K562 (cell line): ENCODE measurements at regions of chr2 and their contacts with region 1.

Region 1: GRCh38 chr2:196171248-196171871 is at the start of gene STK17B:
- DNase-seq: peak; percentile 93 to 97 (median 96)
- ATAC-seq: peak; percentile 87
- H3K4me3 ChIP-seq: peak within 1 kb of the TSS; percentile 87
- H3K27ac ChIP-seq: peak within 1 kb of the TSS; percentile 91
- H3K4me1 ChIP-seq: peaks cover 12 to 26% of the 10 kb centered on the region in 2 experiments; a peak in 4 of 5 replicates
- H3K27me3 ChIP-seq: no peaks in the 10 kb centered on the region
- CTCF ChIP-seq: peak in 2 of 3 experiments; percentile 21 to 28; a peak in 2 of 6 replicates
- EP300 ChIP-seq: no peak
- POLR2A ChIP-seq: peak; percentile 93
- RAD21 ChIP-seq: no peak; a peak in 1 of 4 replicates
- polyA plus RNA-seq, gene STK17B: 2.3 to 3.0 TPM

Region 2: DNA sequence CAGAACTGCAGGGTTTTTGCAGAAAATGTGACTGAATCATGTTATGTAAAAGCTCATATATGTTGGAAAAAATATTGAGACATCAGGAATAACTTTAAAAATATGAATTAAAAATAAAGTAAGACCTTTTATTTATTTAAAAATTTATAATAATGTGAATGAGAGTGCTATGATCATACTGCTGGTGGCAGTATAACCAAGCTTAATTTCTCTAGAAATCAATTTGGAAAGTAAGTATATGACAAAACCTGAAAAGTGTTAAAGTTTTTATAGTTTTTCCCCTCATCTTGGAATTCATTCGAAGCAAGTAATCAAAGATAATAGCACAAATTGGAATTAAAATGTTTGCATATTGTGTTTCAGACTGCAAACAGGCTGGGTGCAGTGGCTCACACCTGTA is 506.8 kb before region 1 on chr2:
- CTCF ChIA-PET with region 1: no interaction called
- POLR2A ChIA-PET with region 1: no interaction called
- in situ Hi-C with region 1: no loop called
- intact Hi-C with region 1: no loop called
- DNase-seq: no peak
- ATAC-seq: no peak
- H3K4me3 ChIP-seq: no peak overlapping the region
- H3K27ac ChIP-seq: no peak overlapping the region
- H3K4me1 ChIP-seq: peaks cover 2 to 6% of the 10 kb centered on the region in 2 experiments; a peak in 3 of 5 replicates
- H3K27me3 ChIP-seq: no peaks in the 10 kb centered on the region
- CTCF ChIP-seq: no peak
- EP300 ChIP-seq: no peak
- POLR2A ChIP-seq: no peak
- RAD21 ChIP-seq: 0 out of 4 replicates have a peak, but pooled peaks of 1 of the 2 experiments have one; percentile 15

Region 3: DNA sequence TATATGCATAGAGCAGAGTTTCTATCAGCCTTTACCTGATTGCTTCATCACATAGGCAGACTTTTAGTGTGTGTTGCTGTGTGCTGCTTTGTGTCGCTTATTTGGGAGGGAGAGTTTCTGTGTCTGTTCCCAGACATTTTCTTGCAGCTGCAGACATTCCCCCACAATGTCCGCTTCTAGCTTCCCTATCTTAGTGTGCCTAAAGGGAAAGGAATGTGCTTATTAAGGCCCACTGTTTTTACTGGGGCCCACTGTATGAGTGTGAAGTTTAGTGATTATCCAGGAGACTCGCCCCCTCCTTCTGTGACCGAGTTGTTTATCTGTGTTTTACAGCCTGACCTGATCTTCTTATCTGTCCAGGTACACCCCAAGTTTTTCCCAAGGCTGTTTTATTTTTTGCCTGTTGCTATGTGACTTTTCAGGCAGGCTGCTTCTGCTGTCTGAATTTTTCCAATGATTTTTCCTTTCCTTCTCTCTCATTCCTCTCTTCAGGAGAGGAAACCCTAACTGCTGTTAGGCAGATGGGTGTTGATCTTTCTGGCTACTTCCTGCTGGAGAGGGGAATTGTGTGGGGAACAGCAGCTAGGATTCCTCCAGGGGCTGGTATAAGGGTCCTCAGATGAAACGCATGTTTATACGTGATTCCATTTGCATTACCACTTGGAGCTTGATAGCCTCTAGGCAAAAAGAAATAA is 47.5 kb before region 1 on chr2:
- CTCF ChIA-PET with region 1: no interaction called
- POLR2A ChIA-PET with region 1: no interaction called
- in situ Hi-C with region 1: no loop called
- intact Hi-C with region 1: no loop called
- DNase-seq: peak; percentile 55 to 79 (median 66)
- ATAC-seq: peak; percentile 79
- H3K4me3 ChIP-seq: no peak overlapping the region; the same call in 1 of the 2 replicates
- H3K27ac ChIP-seq: peak overlapping the region; percentile 65; the same call in 2 of the 3 replicates
- H3K4me1 ChIP-seq: peaks cover 6 to 23% of the 10 kb centered on the region in 2 experiments; a peak in 3 of 5 replicates
- H3K27me3 ChIP-seq: no peaks in the 10 kb centered on the region
- CTCF ChIP-seq: no peak
- EP300 ChIP-seq: peak; percentile 76
- POLR2A ChIP-seq: no peak
- RAD21 ChIP-seq: no peak

Region 4: DNA sequence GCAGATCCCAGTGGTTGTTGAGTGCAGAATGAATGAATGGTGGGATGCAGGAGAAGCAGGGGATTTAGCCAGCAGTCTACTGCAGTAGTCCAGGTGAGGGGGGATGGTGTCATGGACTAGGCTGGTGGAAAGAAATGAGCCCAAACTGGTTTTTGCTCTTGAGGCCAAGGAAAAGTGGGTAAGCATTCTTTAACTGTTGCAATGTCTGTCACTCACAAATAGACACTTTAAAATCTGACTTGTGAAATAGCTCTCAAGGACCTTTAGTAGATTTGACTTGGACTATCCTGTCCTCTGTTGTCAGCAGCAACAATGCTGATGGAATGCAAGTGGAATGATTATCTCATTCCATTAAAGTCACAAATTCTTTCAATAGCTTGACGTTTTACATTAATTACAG is 37.6 kb after region 1 on chr2:
- CTCF ChIA-PET with region 1: no interaction called
- POLR2A ChIA-PET with region 1: no interaction called
- in situ Hi-C with region 1: no loop called
- intact Hi-C with region 1: no loop called
- DNase-seq: no peak
- ATAC-seq: no peak
- H3K4me3 ChIP-seq: no peak overlapping the region
- H3K27ac ChIP-seq: no peak overlapping the region
- H3K4me1 ChIP-seq: peaks cover 0 to 6% of the 10 kb centered on the region in 2 experiments; a peak in 2 of 5 replicates
- H3K27me3 ChIP-seq: no peaks in the 10 kb centered on the region
- CTCF ChIP-seq: no peak
- EP300 ChIP-seq: no peak
- POLR2A ChIP-seq: no peak
- RAD21 ChIP-seq: no peak

Region 5: DNA sequence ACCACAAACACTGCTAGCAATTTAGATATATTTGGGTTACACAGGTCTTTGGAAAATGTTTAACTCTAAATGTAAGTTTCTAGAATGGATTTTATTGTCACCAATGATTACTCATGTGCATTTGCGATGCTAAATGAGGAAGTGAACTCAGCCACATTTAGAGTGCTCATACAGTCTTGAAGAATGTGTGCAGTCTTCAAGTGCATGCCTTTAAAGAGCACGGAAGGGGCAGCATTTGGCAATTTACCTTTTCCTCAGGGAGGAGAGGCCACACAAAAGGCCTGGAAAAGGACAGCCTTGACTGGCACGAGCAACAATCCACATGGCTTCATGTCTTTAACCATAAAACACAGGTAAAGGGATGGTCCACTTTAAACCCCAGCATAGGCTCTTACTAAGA is 78.5 kb after region 1 on chr2:
- CTCF ChIA-PET with region 1: no interaction called
- POLR2A ChIA-PET with region 1: no interaction called
- in situ Hi-C with region 1: no loop called
- intact Hi-C with region 1: no loop called
- DNase-seq: peak in 1 of 4 experiments; percentile 17
- ATAC-seq: peak; percentile 78
- H3K4me3 ChIP-seq: no peak overlapping the region
- H3K27ac ChIP-seq: no peak overlapping the region
- H3K4me1 ChIP-seq: peaks cover 0 to 8% of the 10 kb centered on the region in 2 experiments; a peak in 2 of 5 replicates
- H3K27me3 ChIP-seq: no peaks in the 10 kb centered on the region
- CTCF ChIP-seq: peak in 1 of 3 experiments; percentile 13; a peak in 1 of 6 replicates
- EP300 ChIP-seq: no peak
- POLR2A ChIP-seq: no peak
- RAD21 ChIP-seq: no peak

Region 6: DNA sequence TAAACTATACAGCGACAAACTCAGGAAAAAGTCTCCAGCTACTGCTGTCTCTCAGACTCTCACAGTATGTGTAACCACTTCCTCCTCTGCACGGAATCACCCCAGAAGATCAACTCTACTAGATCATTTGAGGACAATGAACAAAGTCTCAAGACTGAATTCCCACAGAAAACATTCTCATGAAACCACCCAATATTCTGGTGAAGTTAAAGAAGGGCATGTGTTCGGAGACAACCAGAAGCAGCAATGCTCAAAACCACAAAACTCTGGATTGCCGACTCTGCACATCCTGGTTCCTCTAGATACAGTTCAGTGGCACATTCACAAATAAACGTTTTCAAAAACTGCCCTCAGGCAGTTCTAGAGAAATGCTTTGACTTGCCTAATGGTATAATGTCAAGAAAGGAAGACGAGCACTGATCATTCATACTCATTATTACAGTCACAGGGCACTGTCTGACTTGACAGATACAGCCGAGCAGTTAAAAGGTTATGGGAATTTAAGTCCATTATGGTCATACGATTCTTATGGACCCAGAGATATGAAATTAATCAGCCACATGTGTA is 91.9 kb after region 1 on chr2:
- CTCF ChIA-PET with region 1: no interaction called
- POLR2A ChIA-PET with region 1: interaction called, 7 read pairs
- in situ Hi-C with region 1: no loop called
- intact Hi-C with region 1: loop called (anchors 1 kb)
- DNase-seq: peak in 2 of 4 experiments; percentile 19 to 48
- ATAC-seq: peak; percentile 83
- H3K4me3 ChIP-seq: no peak overlapping the region; the same call in 1 of the 2 replicates
- H3K27ac ChIP-seq: peak overlapping the region; percentile 65
- H3K4me1 ChIP-seq: peaks cover 7 to 35% of the 10 kb centered on the region in 2 experiments; a peak in 4 of 5 replicates
- H3K27me3 ChIP-seq: no peaks in the 10 kb centered on the region
- CTCF ChIP-seq: no peak
- EP300 ChIP-seq: 0 out of 2 replicates have a peak, but pooled peaks have one; percentile 3
- POLR2A ChIP-seq: no peak
- RAD21 ChIP-seq: no peak

Region 7: GRCh38 chr2:196277002-196277401 is 105.6 kb after region 1 on chr2:
- CTCF ChIA-PET with region 1: no interaction called
- POLR2A ChIA-PET with region 1: interaction called, 3 read pairs
- in situ Hi-C with region 1: no loop called
- intact Hi-C with region 1: loop called (anchors 5 kb)
- DNase-seq: peak; percentile 15 to 29 (median 23)
- ATAC-seq: peak; percentile 60; the same call in 2 of the 3 replicates
- H3K4me3 ChIP-seq: no peak overlapping the region
- H3K27ac ChIP-seq: no peak overlapping the region
- H3K4me1 ChIP-seq: peaks cover 0 to 7% of the 10 kb centered on the region in 2 experiments; a peak in 2 of 5 replicates
- H3K27me3 ChIP-seq: no peaks in the 10 kb centered on the region
- CTCF ChIP-seq: peak; percentile 28 to 56 (median 38); a peak in 4 of 6 replicates
- EP300 ChIP-seq: no peak
- POLR2A ChIP-seq: no peak
- RAD21 ChIP-seq: peak; percentile 66 to 72